ENCODE measurements at regions of chr14 and their contacts with region 1.

Region 1: GRCh38 chr14:61837336-61838229 is 75.4 kb downstream of the SNAPC1 start:
- DNase-seq: peak; percentile 42 to 86 (median 75)
- ATAC-seq: peak; percentile 99
- H3K4me3 ChIP-seq: no peak overlapping the region
- H3K4me3 Mint-ChIP-seq: no peak overlapping the region
- H3K27ac ChIP-seq: no peak overlapping the region
- H3K27ac Mint-ChIP-seq: no peak overlapping the region
- H3K4me1 ChIP-seq: no peaks in the 10 kb centered on the region
- H3K4me1 Mint-ChIP-seq: no peaks in the 10 kb centered on the region
- H3K27me3 ChIP-seq: no peaks in the 10 kb centered on the region
- H3K27me3 Mint-ChIP-seq: peaks cover 2% of the 10 kb centered on the region
- CTCF ChIP-seq: peak; percentile 86

Region 2: DNA sequence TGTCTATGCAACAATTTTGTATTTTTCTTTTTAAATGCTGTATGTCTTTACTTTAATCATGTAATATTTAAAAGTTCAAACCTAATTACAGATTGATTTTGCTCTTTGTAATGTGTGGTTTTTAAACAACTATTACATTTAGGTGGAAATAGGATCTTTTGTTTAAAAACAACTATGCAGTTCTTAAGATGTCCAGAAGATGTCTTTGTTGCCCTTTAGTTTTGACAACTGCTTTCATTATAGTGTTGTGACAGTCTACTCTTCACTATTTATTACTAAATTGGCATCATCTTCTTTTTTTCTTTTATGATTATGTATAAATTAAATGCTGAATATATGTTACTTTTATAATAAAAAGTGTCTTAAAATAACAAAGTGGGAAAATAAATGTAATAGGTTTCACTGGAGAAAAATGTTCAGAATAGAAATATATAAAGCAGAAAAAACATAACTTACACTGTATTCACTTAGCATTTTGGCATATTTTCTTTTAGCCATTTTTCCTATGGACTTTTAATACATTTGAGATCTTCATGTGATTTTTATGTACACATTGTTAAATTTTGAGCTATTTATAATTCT is 1773.0 kb before region 1 on chr14:
- CTCF ChIA-PET with region 1: no interaction called
- POLR2A ChIA-PET with region 1: no interaction called
- intact Hi-C with region 1: no loop called
- DNase-seq: peak in 2 of 9 experiments; percentile 53 to 66
- ATAC-seq: peak; percentile 80
- H3K4me3 ChIP-seq: no peak overlapping the region
- H3K4me3 Mint-ChIP-seq: no peak overlapping the region
- H3K27ac ChIP-seq: no peak overlapping the region
- H3K27ac Mint-ChIP-seq: no peak overlapping the region
- H3K4me1 ChIP-seq: no peaks in the 10 kb centered on the region
- H3K4me1 Mint-ChIP-seq: no peaks in the 10 kb centered on the region
- H3K27me3 ChIP-seq: no peaks in the 10 kb centered on the region
- H3K27me3 Mint-ChIP-seq: peaks cover 2% of the 10 kb centered on the region
- CTCF ChIP-seq: peak; percentile 71

Region 3: DNA sequence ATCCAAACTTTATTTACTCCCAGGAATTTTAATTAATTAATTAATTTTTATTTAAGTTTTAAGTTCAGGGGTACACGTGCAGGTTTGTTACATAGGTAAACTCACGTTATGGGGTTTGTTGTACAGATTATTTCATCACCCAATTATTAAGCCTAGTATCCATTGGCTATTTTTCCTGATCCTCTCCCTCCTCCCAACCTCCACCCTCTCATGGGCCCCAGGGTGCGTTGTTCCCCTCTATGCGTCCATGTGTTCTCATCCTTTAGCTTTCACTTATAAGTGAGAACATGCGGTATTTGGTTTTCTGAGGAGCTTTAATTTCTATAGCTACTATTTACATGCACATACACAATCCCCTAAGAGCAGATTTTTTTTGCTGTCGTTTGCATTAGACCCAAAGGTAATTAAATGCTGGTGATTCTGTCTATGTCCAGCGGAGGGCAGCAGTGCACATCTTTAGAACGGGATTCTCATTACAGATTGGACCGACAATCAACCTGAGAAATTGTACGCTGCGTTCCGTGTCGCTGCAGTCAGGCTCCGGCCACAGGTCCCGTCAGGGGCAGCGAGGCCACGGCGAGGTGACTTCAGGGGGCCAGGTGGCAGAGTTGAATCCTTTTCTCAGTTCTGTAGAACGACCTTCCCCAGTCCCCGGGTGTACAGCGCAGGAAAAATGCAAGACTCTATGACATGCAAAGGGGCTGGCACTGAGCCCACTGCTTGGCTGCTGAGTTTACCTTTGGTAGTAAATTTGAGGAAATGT is 568.1 kb before region 1 on chr14:
- CTCF ChIA-PET with region 1: interaction called, 45 read pairs
- POLR2A ChIA-PET with region 1: no interaction called
- intact Hi-C with region 1: loop called (anchors 1 kb)
- DNase-seq: peak; percentile 63 to 87 (median 76)
- ATAC-seq: peak; percentile 96
- H3K4me3 ChIP-seq: peak overlapping the region; percentile 27 to 46
- H3K4me3 Mint-ChIP-seq: peak overlapping the region; percentile 75
- H3K27ac ChIP-seq: no peak overlapping the region
- H3K27ac Mint-ChIP-seq: no peak overlapping the region
- H3K4me1 ChIP-seq: no peaks in the 10 kb centered on the region
- H3K4me1 Mint-ChIP-seq: peaks cover 4% of the 10 kb centered on the region
- H3K27me3 ChIP-seq: peaks cover 0 to 4% of the 10 kb centered on the region in 2 experiments
- H3K27me3 Mint-ChIP-seq: peaks cover 38% of the 10 kb centered on the region
- CTCF ChIP-seq: peak; percentile 96

Region 4: GRCh38 chr14:61456720-61457119 is 380.9 kb before region 1 on chr14:
- CTCF ChIA-PET with region 1: interaction called, 40 read pairs
- POLR2A ChIA-PET with region 1: no interaction called
- intact Hi-C with region 1: loop called (anchors 1 to 2 kb)
- DNase-seq: peak; percentile 66 to 91 (median 86)
- ATAC-seq: peak; percentile 39
- H3K4me3 ChIP-seq: no peak overlapping the region
- H3K4me3 Mint-ChIP-seq: no peak overlapping the region
- H3K27ac ChIP-seq: no peak overlapping the region
- H3K27ac Mint-ChIP-seq: peak overlapping the region; percentile 86
- H3K4me1 ChIP-seq: peaks cover 70% of the 10 kb centered on the region
- H3K4me1 Mint-ChIP-seq: peaks cover 85% of the 10 kb centered on the region
- H3K27me3 ChIP-seq: no peaks in the 10 kb centered on the region
- H3K27me3 Mint-ChIP-seq: no peaks in the 10 kb centered on the region
- CTCF ChIP-seq: peak; percentile 84

Region 5: GRCh38 chr14:61547186-61548086 is 290.1 kb before region 1 on chr14:
- CTCF ChIA-PET with region 1: interaction called, 6 read pairs
- POLR2A ChIA-PET with region 1: no interaction called
- intact Hi-C with region 1: loop called in 1 of 2 experiments (anchors 5 kb)
- DNase-seq: no peak
- ATAC-seq: no peak
- H3K4me3 ChIP-seq: no peak overlapping the region
- H3K4me3 Mint-ChIP-seq: no peak overlapping the region
- H3K27ac ChIP-seq: no peak overlapping the region
- H3K27ac Mint-ChIP-seq: peak overlapping the region; percentile 82
- H3K4me1 ChIP-seq: peaks cover 8% of the 10 kb centered on the region
- H3K4me1 Mint-ChIP-seq: peaks cover 33% of the 10 kb centered on the region
- H3K27me3 ChIP-seq: no peaks in the 10 kb centered on the region
- H3K27me3 Mint-ChIP-seq: no peaks in the 10 kb centered on the region
- CTCF ChIP-seq: no peak

Region 6: DNA sequence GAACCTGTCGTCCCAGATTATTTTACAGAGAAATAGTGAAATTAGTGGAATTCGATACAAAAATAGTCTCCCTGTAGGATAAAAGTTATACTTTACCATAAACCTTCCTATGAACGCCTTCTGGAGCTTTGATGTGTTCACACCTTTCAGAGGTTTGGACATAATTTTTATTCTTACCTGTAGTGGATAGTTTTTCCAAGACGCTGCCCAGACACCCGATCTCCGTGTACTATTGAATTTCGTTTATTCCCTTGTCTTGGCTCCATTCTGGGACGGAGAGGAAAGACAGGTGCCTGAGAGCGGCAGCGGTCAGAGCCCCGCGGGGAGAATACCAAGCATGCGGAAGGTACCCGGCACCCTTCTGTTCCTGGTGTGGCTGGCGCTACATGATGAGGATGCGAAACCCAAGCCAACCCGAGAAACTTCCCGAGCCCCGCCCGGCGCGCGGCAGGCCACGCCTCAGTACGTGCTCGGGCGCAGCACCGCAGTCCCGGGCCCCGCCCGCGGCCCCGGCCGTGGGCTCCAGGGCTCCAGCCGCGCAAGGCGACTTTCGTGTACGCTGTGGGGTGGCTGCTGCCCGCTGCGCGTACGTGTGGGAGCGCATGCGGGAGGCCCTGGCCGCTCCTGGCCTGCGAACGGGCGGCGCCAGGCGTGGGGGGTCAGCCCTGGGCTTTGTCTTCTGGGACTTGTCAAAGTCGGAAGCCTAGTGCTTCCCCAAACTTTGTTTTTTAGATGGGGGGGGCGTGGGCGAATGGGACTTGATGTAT is 86.7 kb before region 1 on chr14:
- CTCF ChIA-PET with region 1: interaction called, 16 read pairs
- POLR2A ChIA-PET with region 1: no interaction called
- intact Hi-C with region 1: no loop called
- DNase-seq: peak; percentile 44 to 90 (median 74)
- ATAC-seq: peak; percentile 96
- H3K4me3 ChIP-seq: peak overlapping the region; percentile 53 to 73
- H3K4me3 Mint-ChIP-seq: peak overlapping the region; percentile 88
- H3K27ac ChIP-seq: peak overlapping the region; percentile 43 to 45
- H3K27ac Mint-ChIP-seq: peak overlapping the region; percentile 80
- H3K4me1 ChIP-seq: peaks cover 4% of the 10 kb centered on the region
- H3K4me1 Mint-ChIP-seq: peaks cover 8% of the 10 kb centered on the region
- H3K27me3 ChIP-seq: no peaks in the 10 kb centered on the region
- H3K27me3 Mint-ChIP-seq: peaks cover 2% of the 10 kb centered on the region
- CTCF ChIP-seq: no peak

Region 7: DNA sequence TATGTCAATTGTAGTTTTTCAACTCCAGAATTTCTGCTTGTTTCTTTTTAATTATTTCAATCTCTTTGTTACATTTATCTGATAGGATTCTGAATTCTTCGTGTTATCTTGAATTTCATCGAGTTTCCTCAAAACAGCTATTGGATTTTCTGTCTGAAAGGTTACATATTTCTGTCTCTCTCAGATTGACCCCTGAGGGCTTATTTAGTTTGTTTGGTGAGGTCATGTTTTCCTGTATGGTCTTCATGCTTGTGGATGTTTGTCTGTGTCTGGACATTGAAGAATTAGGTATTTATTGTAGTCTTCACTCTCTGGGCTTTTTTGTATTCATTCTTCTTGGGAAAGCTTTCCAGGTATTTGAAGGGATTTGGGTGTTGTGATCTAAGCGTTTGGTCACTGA is 10.3 kb after region 1 on chr14:
- CTCF ChIA-PET with region 1: interaction called, 29 read pairs
- POLR2A ChIA-PET with region 1: no interaction called
- intact Hi-C with region 1: no loop called
- DNase-seq: no peak
- ATAC-seq: no peak
- H3K4me3 ChIP-seq: no peak overlapping the region
- H3K4me3 Mint-ChIP-seq: no peak overlapping the region
- H3K27ac ChIP-seq: no peak overlapping the region
- H3K27ac Mint-ChIP-seq: no peak overlapping the region
- H3K4me1 ChIP-seq: no peaks in the 10 kb centered on the region
- H3K4me1 Mint-ChIP-seq: no peaks in the 10 kb centered on the region
- H3K27me3 ChIP-seq: no peaks in the 10 kb centered on the region
- H3K27me3 Mint-ChIP-seq: peaks cover 8% of the 10 kb centered on the region
- CTCF ChIP-seq: no peak

Measured in CD8-positive, alpha-beta T cell (primary cell).